ENCODE measurements at regions of chr12 and their contacts with region 1.

Region 1: DNA sequence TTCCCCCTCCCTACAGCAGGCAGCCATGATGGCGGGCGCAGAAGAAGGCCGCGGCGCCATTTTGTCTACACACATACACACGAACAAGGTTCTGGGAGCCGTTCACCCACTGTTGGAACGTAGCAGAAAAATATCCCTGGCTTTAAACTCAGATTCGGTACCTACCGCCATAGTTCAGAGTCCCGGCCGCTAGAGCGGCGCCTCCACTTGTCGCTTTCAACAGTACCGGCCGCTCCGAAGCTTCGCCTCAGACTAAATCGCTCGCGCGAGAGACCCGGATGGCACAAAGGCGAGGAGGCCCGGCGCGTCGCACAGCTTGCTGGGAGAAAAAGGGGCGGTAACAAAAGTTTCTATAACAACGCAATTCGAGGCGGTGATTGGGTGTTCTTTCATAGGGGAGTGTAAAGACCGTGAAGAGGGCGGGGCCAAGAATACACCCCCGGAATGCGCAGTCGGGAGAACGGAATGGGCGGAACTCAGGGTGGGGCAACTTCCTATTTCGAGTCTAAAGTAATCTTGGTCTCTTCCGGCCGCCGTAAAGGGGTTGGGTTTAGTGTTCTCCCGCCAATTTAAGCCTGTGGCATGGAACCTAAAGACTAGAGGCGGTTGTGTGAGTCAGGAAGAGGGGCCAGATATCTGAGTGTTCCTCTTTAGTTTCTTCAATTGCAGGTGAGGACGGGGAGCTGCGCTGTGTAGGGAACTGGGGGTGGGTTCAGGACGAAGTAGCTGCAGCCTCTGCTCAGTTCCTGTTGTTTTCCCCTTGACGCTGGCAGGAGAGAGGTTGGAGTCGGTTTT is at the starts of genes KNTC1 and RSRC2:
- DNase-seq: peak; percentile 100
- H3K4me3 Mint-ChIP-seq: no peak within 1 kb of the TSS
- H3K27ac Mint-ChIP-seq: no peak within 1 kb of the TSS
- H3K4me1 Mint-ChIP-seq: peaks cover 49% of the 10 kb centered on the region
- H3K27me3 Mint-ChIP-seq: no peaks in the 10 kb centered on the region
- total RNA-seq, gene KNTC1: 141 to 142 TPM
- total RNA-seq, gene RSRC2: 117 to 127 TPM

Region 2: GRCh38 chr12:122265931-122266771 is 260.7 kb before region 1 on chr12 and contains the start of gene VPS33A:
- CTCF ChIA-PET with region 1: no interaction called
- intact Hi-C with region 1: loop called (anchors 1 kb)
- DNase-seq: peak; percentile 95
- H3K4me3 Mint-ChIP-seq: peak within 1 kb of the TSS; percentile 94
- H3K27ac Mint-ChIP-seq: peak within 1 kb of the TSS; percentile 96
- H3K4me1 Mint-ChIP-seq: peaks cover 23% of the 10 kb centered on the region
- H3K27me3 Mint-ChIP-seq: peaks cover 3% of the 10 kb centered on the region
- total RNA-seq, gene VPS33A: 15.9 to 17.2 TPM

Region 3: GRCh38 chr12:122449353-122449752 is 77.5 kb before region 1 on chr12:
- CTCF ChIA-PET with region 1: no interaction called
- intact Hi-C with region 1: loop called (anchors 1 kb)
- DNase-seq: peak; percentile 38
- H3K4me3 Mint-ChIP-seq: no peak overlapping the region
- H3K27ac Mint-ChIP-seq: no peak overlapping the region
- H3K4me1 Mint-ChIP-seq: peaks cover 30% of the 10 kb centered on the region
- H3K27me3 Mint-ChIP-seq: no peaks in the 10 kb centered on the region

Region 4: DNA sequence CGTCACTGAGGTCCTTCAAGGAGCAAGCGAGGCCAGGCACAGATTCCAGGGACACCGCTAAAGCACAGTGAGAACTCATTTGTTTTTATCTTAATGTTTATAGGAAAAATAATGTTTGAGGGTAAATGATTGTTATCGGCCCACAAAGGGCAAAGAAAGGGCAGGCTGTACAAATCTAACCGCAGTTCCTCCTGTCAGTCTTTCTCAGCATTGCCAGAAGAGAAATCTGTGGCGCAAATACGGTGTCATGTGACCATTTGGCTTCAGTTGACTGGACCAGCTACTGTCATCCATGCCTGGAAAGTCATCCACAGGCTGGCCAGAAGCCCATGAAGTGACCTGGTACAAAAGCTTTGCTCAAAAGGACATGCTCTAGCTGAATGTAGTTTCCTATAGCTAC is 132.6 kb after region 1 on chr12:
- CTCF ChIA-PET with region 1: no interaction called
- intact Hi-C with region 1: no loop called
- DNase-seq: no peak
- H3K4me3 Mint-ChIP-seq: no peak overlapping the region
- H3K27ac Mint-ChIP-seq: no peak overlapping the region
- H3K4me1 Mint-ChIP-seq: no peaks in the 10 kb centered on the region
- H3K27me3 Mint-ChIP-seq: no peaks in the 10 kb centered on the region

Region 5: GRCh38 chr12:122721057-122721545 is 194.2 kb after region 1 on chr12:
- CTCF ChIA-PET with region 1: no interaction called
- intact Hi-C with region 1: loop called (anchors 1 kb)
- DNase-seq: peak; percentile 26
- H3K4me3 Mint-ChIP-seq: peak overlapping the region; percentile 30
- H3K27ac Mint-ChIP-seq: peak overlapping the region; percentile 88
- H3K4me1 Mint-ChIP-seq: peaks cover 49% of the 10 kb centered on the region
- H3K27me3 Mint-ChIP-seq: no peaks in the 10 kb centered on the region

Region 6: GRCh38 chr12:122752464-122753318 is 225.8 kb after region 1 on chr12 and contains the start of gene DENR:
- CTCF ChIA-PET with region 1: no interaction called
- intact Hi-C with region 1: loop called (anchors 1 kb)
- DNase-seq: peak; percentile 100
- H3K4me3 Mint-ChIP-seq: peak within 1 kb of the TSS; percentile 98
- H3K27ac Mint-ChIP-seq: peak within 1 kb of the TSS; percentile 90
- H3K4me1 Mint-ChIP-seq: peaks cover 51% of the 10 kb centered on the region
- H3K27me3 Mint-ChIP-seq: no peaks in the 10 kb centered on the region
- total RNA-seq, gene DENR: 47.9 to 52.4 TPM

Region 7: GRCh38 chr12:122974274-122974891 is 447.5 kb after region 1 on chr12:
- CTCF ChIA-PET with region 1: no interaction called
- intact Hi-C with region 1: loop called (anchors 1 kb)
- DNase-seq: peak; percentile 100
- H3K4me3 Mint-ChIP-seq: peak overlapping the region; percentile 90
- H3K27ac Mint-ChIP-seq: peak overlapping the region; percentile 100
- H3K4me1 Mint-ChIP-seq: peaks cover 33% of the 10 kb centered on the region
- H3K27me3 Mint-ChIP-seq: no peaks in the 10 kb centered on the region

Measured in activated naive CD4-positive, alpha-beta T cell treated with anti-CD3 and anti-CD28 coated beads for 36 hours (primary cell).